Activated naive CD4-positive, alpha-beta T cell treated with anti-CD3 and anti-CD28 coated beads for 36 hours (primary cell): ENCODE measurements at regions of chr1 and their contacts with region 1.

Region 1: DNA sequence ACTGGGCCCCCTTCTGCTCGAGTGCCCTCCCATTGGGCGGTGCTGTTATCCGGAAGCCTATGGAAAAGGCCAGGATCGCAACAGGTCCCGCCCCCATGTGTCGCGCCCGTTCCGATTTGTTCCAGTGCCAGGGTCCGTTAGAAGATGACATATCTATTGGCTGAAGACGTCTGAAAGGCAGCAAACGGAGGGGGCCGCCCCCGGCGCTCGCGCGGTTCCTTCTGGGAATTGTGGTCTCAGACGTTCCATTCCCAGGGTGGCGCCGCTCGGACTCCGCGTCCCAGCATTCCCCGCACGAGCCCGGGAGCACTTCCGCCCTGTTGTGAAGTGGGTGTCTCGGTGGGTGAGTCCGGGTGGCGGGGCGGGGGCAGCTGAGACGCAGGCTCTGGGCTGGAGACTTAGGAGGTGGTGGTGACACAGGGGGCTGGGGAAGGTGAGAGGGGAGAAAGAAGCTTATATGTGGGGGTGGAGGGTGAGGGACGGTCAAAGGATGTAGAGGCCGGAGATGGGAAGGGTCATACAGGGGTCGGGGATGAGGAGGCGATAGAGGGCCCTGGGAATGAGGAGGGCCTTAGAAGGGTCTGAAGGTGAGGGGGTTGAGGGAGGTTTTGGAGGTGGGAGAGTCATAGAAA is at the start of gene ZSCAN20:
- DNase-seq: peak; percentile 96
- H3K4me3 Mint-ChIP-seq: peak within 1 kb of the TSS; percentile 84
- H3K27ac Mint-ChIP-seq: peak within 1 kb of the TSS; percentile 83
- H3K4me1 Mint-ChIP-seq: peaks cover 24% of the 10 kb centered on the region
- H3K27me3 Mint-ChIP-seq: no peaks in the 10 kb centered on the region
- total RNA-seq, gene ZSCAN20: 2.5 to 2.6 TPM

Region 2: GRCh38 chr1:33094971-33095604 is 377.4 kb before region 1 on chr1:
- CTCF ChIA-PET with region 1: interaction called, 5 read pairs
- intact Hi-C with region 1: loop called (anchors 5 kb)
- DNase-seq: peak; percentile 40
- H3K4me3 Mint-ChIP-seq: no peak overlapping the region
- H3K27ac Mint-ChIP-seq: no peak overlapping the region
- H3K4me1 Mint-ChIP-seq: peaks cover 28% of the 10 kb centered on the region
- H3K27me3 Mint-ChIP-seq: no peaks in the 10 kb centered on the region

Region 3: DNA sequence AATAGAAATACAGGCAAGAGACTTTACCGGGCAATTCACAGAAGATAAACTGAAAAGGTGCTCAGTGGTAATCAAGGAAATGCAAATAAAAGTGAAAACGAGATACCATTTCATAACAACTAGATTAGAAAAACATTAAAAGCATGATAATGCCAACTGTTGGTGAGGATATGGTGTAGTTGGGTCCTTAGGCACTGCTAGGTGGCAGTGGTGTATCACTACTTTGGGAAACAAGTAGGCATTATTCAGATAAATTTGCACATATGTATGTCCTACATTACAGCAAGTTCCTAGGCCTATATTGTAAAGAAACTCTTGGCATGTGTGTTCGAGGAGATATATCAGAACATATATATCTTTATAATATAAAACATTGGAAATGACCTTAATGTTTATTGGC is 360.5 kb before region 1 on chr1:
- CTCF ChIA-PET with region 1: no interaction called
- intact Hi-C with region 1: loop called (anchors 1 kb)
- DNase-seq: no peak
- H3K4me3 Mint-ChIP-seq: no peak overlapping the region
- H3K27ac Mint-ChIP-seq: no peak overlapping the region
- H3K4me1 Mint-ChIP-seq: no peaks in the 10 kb centered on the region
- H3K27me3 Mint-ChIP-seq: no peaks in the 10 kb centered on the region

Region 4: GRCh38 chr1:33256701-33257399 is 215.6 kb before region 1 on chr1:
- CTCF ChIA-PET with region 1: no interaction called
- intact Hi-C with region 1: loop called (anchors 5 kb)
- DNase-seq: peak; percentile 54
- H3K4me3 Mint-ChIP-seq: peak overlapping the region; percentile 96
- H3K27ac Mint-ChIP-seq: peak overlapping the region; percentile 91
- H3K4me1 Mint-ChIP-seq: peaks cover 35% of the 10 kb centered on the region
- H3K27me3 Mint-ChIP-seq: no peaks in the 10 kb centered on the region

Region 5: GRCh38 chr1:33349778-33350610 is 122.5 kb before region 1 on chr1:
- CTCF ChIA-PET with region 1: interaction called, 5 read pairs
- intact Hi-C with region 1: loop called (anchors 1 kb)
- DNase-seq: peak; percentile 76
- H3K4me3 Mint-ChIP-seq: peak overlapping the region; percentile 89
- H3K27ac Mint-ChIP-seq: peak overlapping the region; percentile 84
- H3K4me1 Mint-ChIP-seq: peaks cover 45% of the 10 kb centered on the region
- H3K27me3 Mint-ChIP-seq: no peaks in the 10 kb centered on the region

Region 6: DNA sequence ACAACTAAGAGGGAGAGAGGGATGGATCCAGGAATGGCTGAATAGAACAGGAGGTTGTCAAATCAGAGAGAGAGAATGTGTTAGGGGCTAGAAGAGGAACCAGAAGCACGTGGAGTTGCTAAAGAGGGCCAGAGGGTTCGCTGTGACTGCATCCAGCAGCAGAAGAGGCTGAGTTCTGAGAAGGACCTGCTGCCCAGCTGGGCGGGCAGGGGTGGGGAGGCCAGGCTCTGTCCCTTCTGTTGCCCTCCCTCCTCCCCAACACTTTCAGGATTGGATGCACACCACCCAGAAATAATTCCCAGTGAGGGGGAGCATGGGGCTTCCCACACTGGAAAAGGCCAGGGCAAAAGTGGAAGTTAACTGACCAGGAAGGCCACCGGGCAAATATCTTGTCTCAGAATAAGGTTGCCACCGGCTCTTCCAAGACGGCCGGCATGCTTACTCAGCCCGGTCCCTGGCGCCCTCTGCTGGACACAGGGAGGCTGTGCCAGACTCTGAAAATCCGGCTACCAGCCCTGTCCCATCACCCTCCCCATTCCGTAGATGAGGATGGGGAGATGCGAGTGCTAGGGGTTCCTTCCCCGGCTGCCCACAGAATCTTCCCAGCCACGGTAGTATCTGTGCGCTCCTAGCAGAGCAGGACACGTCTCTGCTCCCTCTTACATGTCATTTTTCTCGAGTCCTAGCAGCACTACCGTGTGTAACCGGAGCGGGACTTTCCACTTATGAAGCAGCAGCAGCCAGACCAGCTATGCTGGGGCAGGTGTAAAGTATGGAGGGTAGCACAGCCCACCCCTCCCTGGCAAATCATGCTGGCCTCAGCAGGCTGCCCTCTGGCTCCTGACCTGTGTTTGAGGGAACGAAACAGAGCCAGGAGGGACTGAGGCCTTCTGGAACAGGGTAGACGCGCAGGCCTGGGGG is 104.7 kb before region 1 on chr1:
- CTCF ChIA-PET with region 1: interaction called, 7 read pairs
- intact Hi-C with region 1: loop called (anchors 5 kb)
- DNase-seq: peak; percentile 92
- H3K4me3 Mint-ChIP-seq: no peak overlapping the region
- H3K27ac Mint-ChIP-seq: no peak overlapping the region
- H3K4me1 Mint-ChIP-seq: no peaks in the 10 kb centered on the region
- H3K27me3 Mint-ChIP-seq: no peaks in the 10 kb centered on the region

Region 7: GRCh38 chr1:33430692-33431593 is 41.5 kb before region 1 on chr1 and contains the start of gene PHC2:
- CTCF ChIA-PET with region 1: no interaction called
- intact Hi-C with region 1: loop called (anchors 1 kb)
- DNase-seq: peak; percentile 95
- H3K4me3 Mint-ChIP-seq: peak within 1 kb of the TSS; percentile 62
- H3K27ac Mint-ChIP-seq: no peak within 1 kb of the TSS
- H3K4me1 Mint-ChIP-seq: peaks cover 2% of the 10 kb centered on the region
- H3K27me3 Mint-ChIP-seq: peaks cover 5% of the 10 kb centered on the region
- total RNA-seq, gene PHC2: 15.6 to 15.9 TPM